ENCODE measurements at regions of chr3 and their contacts with region 1.

Region 1: GRCh38 chr3:11643605-11644087 is at the start of gene VGLL4:
- DNase-seq: peak; percentile 95
- H3K4me3 ChIP-seq: peak within 1 kb of the TSS; percentile 59 to 86
- H3K27ac ChIP-seq: peak within 1 kb of the TSS; percentile 81 to 95
- H3K4me1 ChIP-seq: peaks cover 31% of the 10 kb centered on the region
- H3K27me3 ChIP-seq: no peaks in the 10 kb centered on the region
- CTCF ChIP-seq: peak in 1 of 3 experiments; percentile 11
- POLR2A ChIP-seq: no peak
- total RNA-seq, gene VGLL4: 169 to 209 TPM

Region 2: DNA sequence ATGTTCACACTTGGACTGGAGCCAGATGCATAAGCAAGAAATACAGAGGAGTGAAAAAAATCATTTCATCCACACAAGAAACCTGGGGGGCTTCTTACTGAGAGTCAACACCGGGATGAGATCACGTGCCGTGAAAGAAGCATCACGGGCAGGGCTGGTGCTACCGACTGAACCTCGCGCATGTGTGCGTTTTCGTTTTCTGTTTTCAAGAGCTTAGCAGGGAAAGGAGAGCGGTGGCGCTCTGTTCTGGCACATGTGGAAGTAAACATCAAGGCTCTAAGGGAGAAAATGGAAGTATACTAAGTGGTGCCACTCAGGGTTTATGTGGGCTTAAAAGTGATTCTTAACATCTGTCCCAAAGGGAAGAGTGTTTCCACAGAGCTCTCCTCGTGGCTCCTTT is 55.9 kb before region 1 on chr3:
- intact Hi-C with region 1: loop called (anchors 5 kb)
- DNase-seq: no peak
- H3K4me3 ChIP-seq: no peak overlapping the region
- H3K27ac ChIP-seq: peak overlapping the region; percentile 10 to 57
- H3K4me1 ChIP-seq: peaks cover 61% of the 10 kb centered on the region
- H3K27me3 ChIP-seq: no peaks in the 10 kb centered on the region
- CTCF ChIP-seq: no peak
- POLR2A ChIP-seq: no peak

Region 3: GRCh38 chr3:11755276-11755675 is 111.6 kb after region 1 on chr3:
- intact Hi-C with region 1: no loop called
- DNase-seq: peak; percentile 48
- H3K4me3 ChIP-seq: no peak overlapping the region
- H3K27ac ChIP-seq: peak overlapping the region in 1 of 2 donors; percentile 50
- H3K4me1 ChIP-seq: peaks cover 12% of the 10 kb centered on the region
- H3K27me3 ChIP-seq: no peaks in the 10 kb centered on the region
- CTCF ChIP-seq: no peak
- POLR2A ChIP-seq: no peak

Measured in testis (tissue), 5 donors.